ENCODE measurements at regions of chr2 and their contacts with region 1.

Region 1: GRCh38 chr2:81505586-81505985 is 1201.0 kb upstream of the LRRTM1 start:
- DNase-seq: no peak
- ATAC-seq: no peak
- H3K4me3 ChIP-seq: no peak overlapping the region
- H3K27ac ChIP-seq: no peak overlapping the region
- H3K4me1 ChIP-seq: no peaks in the 10 kb centered on the region
- H3K27me3 ChIP-seq: no peaks in the 10 kb centered on the region
- CTCF ChIP-seq: no peak

Region 2: GRCh38 chr2:81598437-81598836 is 92.9 kb after region 1 on chr2:
- CTCF ChIA-PET with region 1: no interaction called
- POLR2A ChIA-PET with region 1: interaction called, 11 read pairs
- intact Hi-C with region 1: no loop called
- DNase-seq: peak; percentile 69
- ATAC-seq: peak; percentile 67
- H3K4me3 ChIP-seq: no peak overlapping the region
- H3K27ac ChIP-seq: no peak overlapping the region
- H3K4me1 ChIP-seq: peaks cover 10% of the 10 kb centered on the region; the same call in 1 of the 2 replicates
- H3K27me3 ChIP-seq: no peaks in the 10 kb centered on the region
- CTCF ChIP-seq: no peak

Region 3: GRCh38 chr2:81624825-81625224 is 119.2 kb after region 1 on chr2:
- CTCF ChIA-PET with region 1: no interaction called
- POLR2A ChIA-PET with region 1: no interaction called
- intact Hi-C with region 1: no loop called
- DNase-seq: no peak
- ATAC-seq: no peak
- H3K4me3 ChIP-seq: no peak overlapping the region
- H3K27ac ChIP-seq: no peak overlapping the region
- H3K4me1 ChIP-seq: no peaks in the 10 kb centered on the region
- H3K27me3 ChIP-seq: no peaks in the 10 kb centered on the region
- CTCF ChIP-seq: no peak

Measured in PC-3 (cell line).